GM13977 (cell line): ENCODE measurements at regions of chr22 and their contacts with region 1.

Region 1: GRCh38 chr22:26404851-26405421 is 24.1 kb upstream of the ASPHD2 start:
- DNase-seq: no peak
- CTCF ChIP-seq: no peak

Region 2: DNA sequence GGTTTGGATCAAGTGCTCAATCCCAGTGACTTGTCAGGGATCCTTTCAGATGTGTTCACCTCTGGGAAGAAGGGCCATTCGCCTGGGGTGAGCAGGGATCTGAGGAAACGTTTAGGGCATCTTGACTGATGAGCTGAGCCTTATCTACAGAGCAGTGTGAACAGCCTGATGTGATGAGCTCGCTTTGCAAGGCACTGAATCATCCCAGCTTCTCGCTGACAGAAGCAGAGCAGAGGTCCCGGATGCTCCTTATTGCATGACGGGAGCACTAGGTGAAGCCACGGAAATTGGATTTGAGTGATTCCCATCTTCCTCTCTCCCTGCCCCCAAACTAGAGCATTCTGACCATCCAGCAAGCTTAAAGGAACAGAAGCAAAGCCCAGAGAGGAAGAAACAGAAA is 189.2 kb before region 1 on chr22:
- in situ Hi-C with region 1: no loop called
- DNase-seq: no peak
- CTCF ChIP-seq: no peak

Region 3: DNA sequence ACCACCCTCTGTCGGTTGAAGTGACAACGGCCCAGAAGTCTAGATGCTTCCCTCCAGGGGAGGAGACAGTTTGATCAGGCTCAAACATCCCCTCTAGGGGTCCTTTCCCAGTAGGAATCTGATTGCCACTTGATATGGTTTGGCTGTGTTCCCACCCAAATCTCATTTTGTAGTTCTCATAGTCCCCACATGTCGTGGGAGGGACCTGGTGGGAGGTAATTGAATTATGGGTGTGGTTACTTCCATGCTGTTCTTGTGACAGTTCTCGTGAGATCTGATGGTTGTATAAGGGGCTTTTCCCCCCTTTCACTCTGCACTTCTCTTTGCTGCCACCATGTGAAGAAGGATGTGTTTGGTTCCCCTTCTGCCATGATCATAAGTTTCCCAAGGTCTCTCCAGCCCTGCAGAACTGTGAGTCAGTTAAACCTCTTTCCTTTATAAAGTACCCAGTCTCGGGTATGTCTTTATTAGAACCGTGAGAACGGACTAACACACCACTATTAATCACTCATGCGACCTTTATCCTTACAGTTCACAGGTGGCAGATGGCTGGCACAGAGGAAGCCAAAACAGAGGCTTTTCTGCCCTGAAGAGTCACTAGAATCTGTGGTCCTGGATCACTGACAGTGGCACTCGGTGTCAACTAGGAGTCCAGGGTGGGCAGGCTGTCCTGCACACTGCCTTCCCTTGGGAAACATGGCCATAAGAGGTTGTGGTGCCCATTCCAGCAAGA is 45.7 kb after region 1 on chr22:
- in situ Hi-C with region 1: loop called (anchors 10 kb)
- DNase-seq: no peak
- CTCF ChIP-seq: no peak